Left ventricle myocardium inferior (tissue), 1 donor: ENCODE measurements at regions of chr3 and their contacts with region 1.

Region 1: GRCh38 chr3:28334552-28334951 is 14.0 kb upstream of the ZCWPW2 start:
- DNase-seq: no peak
- H3K4me3 ChIP-seq: no peak overlapping the region
- H3K27ac ChIP-seq: no peak overlapping the region
- H3K4me1 ChIP-seq: peaks cover 7% of the 10 kb centered on the region
- H3K27me3 ChIP-seq: no peaks in the 10 kb centered on the region
- CTCF ChIP-seq: peak; percentile 27

Region 2: GRCh38 chr3:26574766-26575165 is 1759.8 kb before region 1 on chr3:
- intact Hi-C with region 1: no loop called
- DNase-seq: no peak
- H3K4me3 ChIP-seq: no peak overlapping the region
- H3K27ac ChIP-seq: no peak overlapping the region
- H3K4me1 ChIP-seq: no peaks in the 10 kb centered on the region
- H3K27me3 ChIP-seq: no peaks in the 10 kb centered on the region
- CTCF ChIP-seq: no peak

Region 3: GRCh38 chr3:27712136-27713077 is 622.1 kb before region 1 on chr3:
- intact Hi-C with region 1: loop called (anchors 5 kb)
- DNase-seq: peak; percentile 67
- H3K4me3 ChIP-seq: peak overlapping the region; percentile 75
- H3K27ac ChIP-seq: no peak overlapping the region
- H3K4me1 ChIP-seq: peaks cover 37% of the 10 kb centered on the region
- H3K27me3 ChIP-seq: peaks cover 86% of the 10 kb centered on the region
- CTCF ChIP-seq: peak; percentile 85